Left cardiac atrium (tissue), 4 donors: ENCODE measurements at regions of chr1 and their contacts with region 1.

Region 1: DNA sequence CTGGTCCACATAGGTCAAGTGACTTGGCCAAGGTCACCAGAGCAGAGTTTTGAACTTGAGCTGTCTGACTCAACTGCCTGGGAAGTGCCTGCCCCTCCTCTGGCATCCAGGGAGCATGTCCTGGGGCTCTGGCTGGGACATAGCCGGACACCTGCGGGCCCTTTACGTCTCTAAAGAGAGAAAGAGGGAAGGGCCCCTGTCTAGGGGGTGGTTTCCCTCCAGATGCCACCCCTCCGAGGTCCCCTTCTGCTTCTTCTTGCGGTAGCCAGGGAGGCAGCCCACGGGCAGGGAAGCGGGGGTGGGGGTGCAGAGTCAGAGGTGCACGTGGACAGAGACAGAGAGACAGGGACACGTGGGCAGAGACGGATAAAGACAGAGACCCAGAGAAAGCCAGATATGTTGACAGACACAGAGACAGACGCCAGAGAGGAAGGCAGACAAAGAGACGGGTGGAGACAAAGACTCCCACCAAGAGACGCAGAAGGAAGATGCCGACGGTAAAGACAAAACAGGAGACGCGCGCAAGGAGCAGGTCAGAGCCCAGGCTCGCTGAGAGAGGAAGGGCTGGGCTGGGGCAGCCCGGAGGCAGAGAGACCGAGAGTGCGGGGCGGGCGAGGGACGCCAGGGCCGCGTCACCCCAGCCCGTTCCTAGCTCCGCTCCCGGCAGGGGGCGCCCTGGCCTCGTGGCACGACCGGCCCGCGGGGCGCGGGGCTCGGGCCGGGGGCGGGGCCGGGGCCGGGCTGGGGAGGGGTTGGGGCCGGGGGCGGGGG is 458 bp upstream of the ALPL start:
- DNase-seq: peak; percentile 84
- ATAC-seq: peak; percentile 78 to 82

Region 2: GRCh38 chr1:21255278-21255942 is 253.4 kb before region 1 on chr1:
- intact Hi-C with region 1: no loop called
- DNase-seq: peak; percentile 93
- ATAC-seq: peak; percentile 82 to 90

Region 3: GRCh38 chr1:21378705-21379494 is 129.9 kb before region 1 on chr1:
- intact Hi-C with region 1: loop called in 1 of 2 experiments (anchors 10 kb)
- DNase-seq: no peak
- ATAC-seq: no peak

Region 4: DNA sequence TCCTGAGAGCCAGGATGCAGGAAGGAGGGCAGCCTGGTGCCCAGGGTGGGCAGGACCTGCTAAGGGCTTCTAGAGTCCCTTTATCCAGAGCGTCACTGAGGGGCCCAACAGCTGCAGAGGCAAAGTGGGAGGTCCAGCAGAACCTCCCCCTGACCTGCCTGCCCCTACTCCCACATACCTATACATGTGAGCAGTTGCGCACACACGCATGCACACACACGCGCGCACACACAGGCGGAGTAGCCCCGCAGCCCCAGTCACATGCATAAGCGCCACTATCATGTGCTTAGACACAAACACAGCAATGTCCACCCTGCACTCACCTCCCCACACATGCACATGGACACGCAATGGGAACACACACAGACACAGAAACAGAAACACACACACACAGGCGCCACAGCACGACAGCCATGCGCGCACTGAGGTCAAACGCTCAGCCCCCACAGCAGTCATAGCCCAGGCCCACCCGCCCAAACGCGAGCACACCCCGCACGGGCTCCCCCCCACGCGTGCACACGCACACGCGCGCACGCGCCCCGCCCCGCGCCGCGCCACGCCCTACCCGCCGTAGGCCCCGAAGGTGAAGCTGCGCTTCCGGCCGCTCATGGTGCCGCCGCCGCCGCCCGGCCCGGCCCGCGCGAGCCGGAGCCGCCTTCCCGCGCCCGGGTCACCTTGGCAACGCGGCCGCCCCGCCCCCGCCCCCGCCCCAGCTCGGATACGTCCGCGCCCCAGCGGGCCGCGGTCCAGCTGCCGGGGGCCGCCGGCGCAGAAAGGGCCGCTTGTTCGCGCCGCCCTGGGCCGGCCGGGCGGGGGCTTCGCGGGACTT is 142.7 kb after region 1 on chr1:
- intact Hi-C with region 1: loop called (anchors 5 to 10 kb)
- DNase-seq: no peak
- ATAC-seq: peak; percentile 68 to 78

Region 5: GRCh38 chr1:21659099-21659923 is 150.5 kb after region 1 on chr1:
- intact Hi-C with region 1: loop called (anchors 5 to 10 kb)
- DNase-seq: peak; percentile 77
- ATAC-seq: peak; percentile 82 to 84